Right cardiac atrium (tissue), 5 donors: ENCODE measurements at regions of chr15 and their contacts with region 1.

Region 1: DNA sequence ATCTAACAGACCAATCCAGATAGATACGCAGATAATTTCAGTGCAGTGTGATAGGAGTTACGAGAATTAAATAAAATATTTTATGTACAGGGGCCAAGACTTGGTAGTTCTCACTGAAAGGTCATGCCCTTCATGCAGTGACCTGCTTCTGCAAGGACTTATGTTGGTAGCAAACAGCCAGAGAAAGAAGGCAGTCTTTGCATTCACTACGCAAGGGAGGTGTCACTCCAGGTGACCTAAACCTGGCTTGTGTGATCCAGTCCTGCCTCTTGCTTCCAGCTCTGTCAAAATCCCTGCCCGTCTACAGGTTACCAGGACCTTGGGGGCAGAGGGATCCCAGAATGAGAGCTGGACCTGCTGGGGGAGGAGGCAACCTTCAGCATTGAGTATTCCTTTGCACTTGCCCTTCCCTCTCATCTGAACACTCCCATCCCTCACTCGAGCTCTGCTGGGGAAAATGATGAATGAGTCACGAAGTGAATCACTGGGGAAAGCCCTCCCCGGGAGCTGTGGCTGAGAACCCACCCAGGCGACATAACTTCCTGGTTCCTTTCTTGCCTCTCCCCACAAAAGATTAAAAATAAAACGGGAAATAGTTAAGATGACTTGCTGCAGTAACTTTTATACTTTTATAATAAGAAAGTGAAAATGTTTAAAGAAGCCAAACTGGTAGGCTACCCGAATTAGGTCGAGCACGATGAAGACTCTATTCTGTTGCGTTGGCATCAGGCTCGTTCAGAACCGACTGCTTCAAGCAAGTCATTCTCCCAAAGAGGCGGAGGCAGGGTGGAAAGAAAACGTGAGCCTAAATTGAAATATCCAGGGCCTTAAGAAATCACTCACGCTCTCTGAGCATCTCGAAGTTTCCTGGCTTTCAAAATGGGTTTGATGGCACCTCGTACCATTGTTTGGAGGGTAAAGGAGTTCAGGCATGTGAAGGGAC is 216.1 kb downstream of the SLCO3A1 start:
- DNase-seq: peak in 2 of 3 donors; percentile 62 to 63
- ATAC-seq: peak; percentile 77 to 95
- H3K4me3 ChIP-seq: peak overlapping the region; percentile 13
- H3K27ac ChIP-seq: peak overlapping the region; percentile 85
- H3K4me1 ChIP-seq: peaks cover 15% of the 10 kb centered on the region
- H3K27me3 ChIP-seq: no peaks in the 10 kb centered on the region

Region 2: DNA sequence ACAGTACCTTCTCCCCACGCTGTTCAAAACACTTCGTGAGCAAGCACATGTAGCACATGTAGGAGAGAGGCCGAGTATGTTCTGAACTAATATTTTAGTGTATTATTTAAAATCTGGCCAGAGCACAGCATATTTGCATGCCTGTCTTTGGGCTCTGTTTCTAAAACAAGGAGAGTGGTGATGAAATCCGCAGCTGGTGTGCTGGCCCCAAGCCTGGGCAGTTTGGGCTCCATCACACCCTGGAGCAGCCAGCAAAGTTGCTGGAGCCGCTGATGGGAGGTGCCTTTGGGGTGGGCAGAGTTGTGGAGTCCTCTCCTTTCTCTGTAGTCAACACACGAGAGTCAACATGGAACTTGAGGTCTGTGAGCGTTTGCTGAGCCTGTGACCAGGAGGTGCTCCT is 99.4 kb before region 1 on chr15:
- intact Hi-C with region 1: loop called in 2 of 4 experiments (anchors 10 kb)
- DNase-seq: peak; percentile 84 to 95 (median 93)
- ATAC-seq: peak; percentile 79 to 90
- H3K4me3 ChIP-seq: no peak overlapping the region
- H3K27ac ChIP-seq: peak overlapping the region; percentile 70
- H3K4me1 ChIP-seq: peaks cover 43% of the 10 kb centered on the region
- H3K27me3 ChIP-seq: no peaks in the 10 kb centered on the region

Region 3: DNA sequence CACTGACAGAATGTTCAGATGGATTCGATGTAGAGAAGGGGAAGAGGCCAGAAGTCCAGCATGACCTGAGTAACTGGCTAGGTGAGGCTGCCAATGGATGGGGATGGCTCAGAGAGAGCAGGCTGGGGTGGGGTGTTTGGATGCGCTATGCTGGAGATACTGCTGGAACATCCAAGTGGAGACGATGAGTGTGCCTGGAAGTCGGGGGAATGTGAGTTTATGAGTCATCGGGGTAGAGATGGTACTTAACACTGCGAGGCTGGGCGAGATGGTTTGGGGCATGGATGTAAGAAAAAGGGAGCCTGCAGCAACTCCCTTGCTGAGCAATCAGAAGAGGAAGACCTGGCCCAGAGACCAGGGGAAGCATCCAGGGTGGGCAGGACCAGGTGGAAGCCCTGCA is 35.4 kb before region 1 on chr15:
- intact Hi-C with region 1: loop called in 1 of 4 experiments (anchors 5 kb)
- DNase-seq: no peak
- ATAC-seq: peak; percentile 23 to 53
- H3K4me3 ChIP-seq: no peak overlapping the region
- H3K27ac ChIP-seq: no peak overlapping the region
- H3K4me1 ChIP-seq: peaks cover 14% of the 10 kb centered on the region
- H3K27me3 ChIP-seq: no peaks in the 10 kb centered on the region